IMR-90 (cell line): ENCODE measurements at regions of chr2 and their contacts with region 1.

Region 1: DNA sequence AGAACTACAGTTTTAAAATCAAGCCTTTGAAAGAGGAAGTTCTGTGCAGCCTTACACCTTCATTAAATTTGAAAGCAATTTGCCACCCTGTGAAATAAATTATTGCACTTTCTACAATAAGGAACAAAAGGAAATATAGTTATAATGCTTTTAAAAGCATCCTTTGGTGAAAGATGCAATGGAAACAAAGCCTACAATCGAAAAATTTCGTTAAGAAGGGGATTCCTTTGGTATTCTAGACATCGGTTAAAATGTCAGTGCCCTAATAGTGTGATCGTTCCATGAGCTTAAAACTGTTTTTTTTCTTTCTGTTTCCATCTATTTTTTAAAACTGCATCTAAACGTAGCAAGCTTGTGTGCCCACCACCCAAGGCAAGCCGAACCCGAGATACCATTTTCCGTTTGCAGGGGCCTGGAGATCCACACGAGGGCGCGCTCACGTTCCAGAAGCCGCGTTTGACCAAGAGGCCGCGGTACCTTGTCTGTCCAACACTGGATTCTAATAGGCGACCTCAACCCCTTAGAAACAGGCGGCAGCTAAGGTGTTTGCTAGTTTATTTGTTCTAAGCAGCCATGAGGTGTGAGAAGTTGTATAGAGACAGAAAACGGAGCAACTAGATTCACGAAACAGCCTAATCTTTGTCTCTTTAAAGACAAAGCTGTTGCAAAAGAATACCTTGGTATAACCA is 4.0 kb downstream of the HOXD11 start:
- DNase-seq: peak; percentile 28
- ATAC-seq: 0 out of 2 replicates have a peak, but pooled peaks have one; percentile 50
- H3K4me3 ChIP-seq: no peak overlapping the region
- H3K27ac ChIP-seq: no peak overlapping the region
- H3K4me1 ChIP-seq: no peaks in the 10 kb centered on the region
- H3K27me3 ChIP-seq: peaks cover 89% of the 10 kb centered on the region
- CTCF ChIP-seq: peak; percentile 50
- POLR2A ChIP-seq: no peak
- RAD21 ChIP-seq: no peak

Region 2: GRCh38 chr2:176135034-176135440 is 23.9 kb after region 1 on chr2:
- CTCF ChIA-PET with region 1: interaction called, 3 read pairs
- POLR2A ChIA-PET with region 1: no interaction called
- dilution Hi-C with region 1: no loop called
- in situ Hi-C with region 1: no loop called
- intact Hi-C with region 1: loop called (anchors 1 kb)
- DNase-seq: no peak
- ATAC-seq: no peak
- H3K4me3 ChIP-seq: no peak overlapping the region
- H3K27ac ChIP-seq: no peak overlapping the region
- H3K4me1 ChIP-seq: no peaks in the 10 kb centered on the region
- H3K27me3 ChIP-seq: peaks cover 93% of the 10 kb centered on the region
- CTCF ChIP-seq: no peak
- POLR2A ChIP-seq: no peak
- RAD21 ChIP-seq: no peak

Region 3: GRCh38 chr2:176763851-176764404 is 652.8 kb after region 1 on chr2:
- CTCF ChIA-PET with region 1: no interaction called
- POLR2A ChIA-PET with region 1: no interaction called
- dilution Hi-C with region 1: no loop called
- in situ Hi-C with region 1: no loop called
- intact Hi-C with region 1: no loop called
- DNase-seq: no peak
- ATAC-seq: no peak
- H3K4me3 ChIP-seq: no peak overlapping the region
- H3K27ac ChIP-seq: no peak overlapping the region
- H3K4me1 ChIP-seq: no peaks in the 10 kb centered on the region
- H3K27me3 ChIP-seq: no peaks in the 10 kb centered on the region
- CTCF ChIP-seq: no peak
- POLR2A ChIP-seq: no peak
- RAD21 ChIP-seq: no peak